Pancreas (tissue), 10 donors: ENCODE measurements at regions of chr19 and their contacts with region 1.

Region 1: GRCh38 chr19:58154679-58155648 is 4.4 kb upstream of the ZNF329 start:
- DNase-seq: peak; percentile 93 to 100 (median 96)
- ATAC-seq: peak; percentile 92 to 98 (median 94)
- H3K4me3 ChIP-seq: peak overlapping the region; percentile 51 to 100 (median 94)
- H3K27ac ChIP-seq: peak overlapping the region; percentile 79 to 88 (median 84)
- H3K4me1 ChIP-seq: peaks cover 0 to 1% (median 0%) of the 10 kb centered on the region in 3 donors
- H3K27me3 ChIP-seq: no peaks in the 10 kb centered on the region
- CTCF ChIP-seq: peak; percentile 95 to 98 (median 96)

Region 2: GRCh38 chr19:57746580-57747471 is 408.1 kb before region 1 on chr19 and contains the start of gene ZNF776:
- intact Hi-C with region 1: loop called in 1 of 3 experiments (anchors 10 kb)
- DNase-seq: peak; percentile 69 to 86 (median 76)
- ATAC-seq: peak; percentile 99 to 100 (median 99)
- H3K4me3 ChIP-seq: peak within 1 kb of the TSS; percentile 74 to 99 (median 88)
- H3K27ac ChIP-seq: peak within 1 kb of the TSS; percentile 29 to 75 (median 66)
- H3K4me1 ChIP-seq: peaks cover 0 to 6% (median 0%) of the 10 kb centered on the region in 3 donors
- H3K27me3 ChIP-seq: no peaks in the 10 kb centered on the region
- CTCF ChIP-seq: no peak
- total RNA-seq, gene ZNF776: 2.9 to 10.8 (median 4.5) TPM

Region 3: GRCh38 chr19:58021541-58022282 is 133.3 kb before region 1 on chr19:
- intact Hi-C with region 1: loop called in 1 of 3 experiments (anchors 10 kb)
- DNase-seq: peak in 3 of 6 donors; percentile 29 to 56 (median 40)
- ATAC-seq: peak; percentile 53 to 91 (median 82)
- H3K4me3 ChIP-seq: no peak overlapping the region
- H3K27ac ChIP-seq: no peak overlapping the region
- H3K4me1 ChIP-seq: no peaks in the 10 kb centered on the region
- H3K27me3 ChIP-seq: no peaks in the 10 kb centered on the region
- CTCF ChIP-seq: peak in 2 of 4 donors; percentile 32 to 42